Dendritic cell treated with granulocyte-macrophage colony-stimulating factor and Interleukin-4, amounts not matched to agents 40 ng/mL and 50 ng/mL, for 4 days (primary cell): ENCODE measurements at regions of chr4 and their contacts with region 1.

Region 1: GRCh38 chr4:74932816-74933561 is at the start of gene PARM1:
- H3K4me3 Mint-ChIP-seq: peak within 1 kb of the TSS; percentile 91
- H3K27ac Mint-ChIP-seq: peak within 1 kb of the TSS; percentile 74
- H3K4me1 Mint-ChIP-seq: peaks cover 39% of the 10 kb centered on the region
- H3K27me3 Mint-ChIP-seq: peaks cover 65% of the 10 kb centered on the region

Region 2: GRCh38 chr4:74123065-74123728 is 809.8 kb before region 1 on chr4:
- intact Hi-C with region 1: no loop called
- H3K4me3 Mint-ChIP-seq: no peak overlapping the region
- H3K27ac Mint-ChIP-seq: no peak overlapping the region
- H3K4me1 Mint-ChIP-seq: no peaks in the 10 kb centered on the region
- H3K27me3 Mint-ChIP-seq: no peaks in the 10 kb centered on the region

Region 3: GRCh38 chr4:74418063-74418670 is 514.8 kb before region 1 on chr4:
- intact Hi-C with region 1: no loop called
- H3K4me3 Mint-ChIP-seq: no peak overlapping the region
- H3K27ac Mint-ChIP-seq: no peak overlapping the region
- H3K4me1 Mint-ChIP-seq: peaks cover 11% of the 10 kb centered on the region
- H3K27me3 Mint-ChIP-seq: no peaks in the 10 kb centered on the region

Region 4: GRCh38 chr4:74855879-74856278 is 77.1 kb before region 1 on chr4:
- intact Hi-C with region 1: no loop called
- H3K4me3 Mint-ChIP-seq: no peak overlapping the region
- H3K27ac Mint-ChIP-seq: no peak overlapping the region
- H3K4me1 Mint-ChIP-seq: no peaks in the 10 kb centered on the region
- H3K27me3 Mint-ChIP-seq: no peaks in the 10 kb centered on the region

Region 5: GRCh38 chr4:75036046-75036830 is 103.2 kb after region 1 on chr4:
- intact Hi-C with region 1: loop called (anchors 5 kb)
- H3K4me3 Mint-ChIP-seq: peak overlapping the region; percentile 9
- H3K27ac Mint-ChIP-seq: peak overlapping the region; percentile 77
- H3K4me1 Mint-ChIP-seq: peaks cover 48% of the 10 kb centered on the region
- H3K27me3 Mint-ChIP-seq: no peaks in the 10 kb centered on the region

Region 6: DNA sequence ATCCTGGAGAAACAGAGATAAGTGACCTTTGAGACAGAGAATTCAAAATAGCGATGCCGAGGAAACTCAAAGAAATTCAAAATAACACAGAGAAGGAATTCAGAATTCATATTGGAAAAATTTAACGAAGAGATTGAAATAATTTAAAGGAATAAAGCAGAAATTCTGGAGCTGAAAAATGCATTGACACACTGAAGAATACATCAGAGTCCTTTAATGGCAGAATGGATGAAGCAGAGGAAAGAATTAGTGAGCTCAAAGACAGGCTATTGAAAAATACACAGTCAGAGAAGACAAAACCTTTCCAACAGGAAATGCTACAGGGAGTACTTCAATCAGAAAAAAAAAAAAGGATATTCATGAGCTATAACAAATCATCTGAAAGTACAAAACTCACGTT is 185.8 kb after region 1 on chr4:
- intact Hi-C with region 1: loop called (anchors 1 kb)
- H3K4me3 Mint-ChIP-seq: no peak overlapping the region
- H3K27ac Mint-ChIP-seq: no peak overlapping the region
- H3K4me1 Mint-ChIP-seq: no peaks in the 10 kb centered on the region
- H3K27me3 Mint-ChIP-seq: peaks cover 4% of the 10 kb centered on the region

Region 7: GRCh38 chr4:75289914-75290582 is 357.1 kb after region 1 on chr4:
- intact Hi-C with region 1: loop called (anchors 10 kb)
- H3K4me3 Mint-ChIP-seq: no peak overlapping the region
- H3K27ac Mint-ChIP-seq: no peak overlapping the region
- H3K4me1 Mint-ChIP-seq: no peaks in the 10 kb centered on the region
- H3K27me3 Mint-ChIP-seq: no peaks in the 10 kb centered on the region

Region 8: DNA sequence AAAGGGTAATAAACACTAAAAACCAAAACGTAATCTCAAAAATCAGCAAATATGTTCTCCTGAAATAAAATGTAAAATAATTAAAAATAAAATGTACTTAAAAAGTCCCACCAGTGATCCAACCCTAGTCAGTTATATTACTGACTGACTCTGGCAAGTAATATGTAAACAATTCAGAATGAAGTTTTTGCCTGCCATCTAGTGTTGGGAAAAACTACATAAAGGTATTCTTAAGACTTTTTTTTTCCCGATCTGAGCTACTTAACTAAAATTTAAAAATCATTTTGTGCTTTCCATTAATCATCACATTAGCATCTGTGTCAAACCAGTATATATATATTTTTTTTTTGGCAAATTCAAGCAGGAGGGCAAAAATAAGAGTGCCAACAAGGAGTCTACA is 557.2 kb after region 1 on chr4:
- intact Hi-C with region 1: loop called (anchors 10 kb)
- H3K4me3 Mint-ChIP-seq: no peak overlapping the region
- H3K27ac Mint-ChIP-seq: no peak overlapping the region
- H3K4me1 Mint-ChIP-seq: peaks cover 8% of the 10 kb centered on the region
- H3K27me3 Mint-ChIP-seq: no peaks in the 10 kb centered on the region